Adrenal gland (tissue), 19 donors: ENCODE measurements at regions of chr7 and their contacts with region 1.

Region 1: DNA sequence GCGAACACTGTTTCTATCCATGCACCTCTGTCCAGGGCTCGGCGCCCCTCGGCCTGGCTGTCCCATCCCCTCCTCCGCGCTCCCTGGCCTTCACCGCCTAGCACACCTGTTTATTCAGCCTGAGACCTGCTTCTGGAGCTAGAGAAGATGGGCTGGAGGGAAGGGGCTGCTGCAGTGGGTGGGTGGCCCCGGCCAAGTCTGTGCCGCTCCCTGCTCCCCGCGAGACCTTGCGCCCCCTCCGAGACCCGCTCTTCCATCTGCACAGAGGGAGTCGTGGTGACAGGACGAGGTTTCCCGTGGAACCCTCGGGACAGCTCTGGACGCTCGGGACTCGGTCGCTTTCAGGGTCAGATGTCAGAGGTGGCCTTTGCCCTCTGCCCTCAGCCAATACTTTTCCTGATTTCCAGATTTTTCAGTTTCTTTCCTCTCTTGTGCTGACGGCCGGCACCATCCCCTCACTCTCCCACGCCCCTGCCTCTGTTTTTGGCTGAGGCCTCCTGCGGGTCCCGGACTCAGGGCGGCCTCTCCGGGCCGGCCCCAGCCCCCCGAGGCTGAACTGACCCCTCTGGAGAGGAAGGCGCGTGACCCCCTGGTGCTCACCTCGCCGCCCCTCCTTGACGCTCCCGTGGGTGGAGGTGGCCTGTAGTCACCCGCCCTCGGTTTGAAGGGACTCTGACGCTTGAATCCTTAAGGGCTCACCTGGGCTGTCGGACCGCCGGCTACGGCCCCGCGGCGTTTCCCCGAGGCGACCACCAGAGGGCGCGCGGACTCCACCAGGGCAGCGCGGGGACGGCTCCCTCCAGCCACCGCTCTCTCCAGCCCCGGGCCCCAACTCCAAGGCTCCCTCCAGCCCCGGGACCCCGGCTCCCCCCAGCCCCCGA is 15.6 kb downstream of the SHH start:
- DNase-seq: peak; percentile 46 to 79 (median 69)
- H3K4me3 ChIP-seq: peak overlapping the region in 1 of 4 donors; percentile 24
- H3K27ac ChIP-seq: no peak overlapping the region
- H3K4me1 ChIP-seq: peaks cover 0 to 7% of the 10 kb centered on the region in 2 donors
- H3K27me3 ChIP-seq: peaks cover 15% of the 10 kb centered on the region
- CTCF ChIP-seq: peak; percentile 60 to 94 (median 88)
- POLR2A ChIP-seq: no peak

Region 2: DNA sequence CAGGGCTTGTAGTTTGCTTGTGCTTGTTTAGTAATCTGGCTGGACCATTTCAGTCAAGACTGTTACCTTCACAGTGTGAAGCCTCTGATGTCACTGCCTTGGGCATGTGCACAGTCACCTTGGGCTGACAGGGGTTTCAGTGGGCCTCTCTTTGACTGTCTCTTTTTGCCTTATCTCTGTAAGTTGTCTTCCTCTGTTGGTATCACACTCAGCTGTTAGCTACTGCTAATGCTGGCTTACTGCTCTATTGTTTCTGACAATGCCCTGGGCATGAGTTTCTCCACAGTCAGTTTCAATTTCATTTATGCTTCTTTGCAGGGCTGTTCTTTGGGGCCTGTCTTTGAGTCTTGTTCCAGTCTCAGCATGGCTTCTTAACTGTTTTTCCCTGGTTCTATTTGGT is 217.6 kb after region 1 on chr7:
- intact Hi-C with region 1: no loop called
- DNase-seq: peak in 2 of 7 donors; percentile 4 to 7
- H3K4me3 ChIP-seq: no peak overlapping the region
- H3K27ac ChIP-seq: no peak overlapping the region
- H3K4me1 ChIP-seq: peaks cover 0 to 6% of the 10 kb centered on the region in 2 donors
- H3K27me3 ChIP-seq: no peaks in the 10 kb centered on the region
- CTCF ChIP-seq: no peak
- POLR2A ChIP-seq: no peak

Region 3: DNA sequence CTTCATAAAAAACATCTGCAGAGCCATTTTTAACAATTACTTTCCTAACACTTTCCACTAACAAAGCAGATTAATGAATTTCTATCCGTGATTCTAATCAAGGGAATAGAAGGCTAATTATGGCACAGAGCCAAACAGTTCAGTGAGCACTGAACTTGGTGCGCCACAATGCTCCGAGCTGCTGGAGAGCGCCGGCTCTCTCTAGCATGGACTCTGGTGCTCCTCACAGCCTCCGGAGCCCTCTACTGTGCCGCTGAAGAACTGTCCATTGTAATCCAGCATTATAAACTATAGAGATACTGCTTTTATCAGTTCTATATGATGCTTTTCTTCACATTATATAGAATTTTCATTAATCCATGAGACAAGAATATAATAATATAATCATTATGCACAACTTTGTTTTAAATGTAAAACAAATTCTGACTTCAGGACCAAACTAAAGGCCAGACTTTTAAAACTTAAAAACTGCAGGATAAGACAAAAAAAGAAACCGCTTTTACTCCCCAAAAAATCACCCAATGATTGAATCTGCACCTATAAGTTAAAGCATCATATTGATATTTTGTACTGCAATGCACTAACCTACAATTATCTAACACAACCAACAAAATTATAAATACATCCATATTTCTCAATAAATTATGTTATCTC is 967.5 kb after region 1 on chr7:
- intact Hi-C with region 1: loop called in 1 of 2 experiments (anchors 10 kb)
- DNase-seq: peak; percentile 73 to 87 (median 78)
- H3K4me3 ChIP-seq: no peak overlapping the region
- H3K27ac ChIP-seq: no peak overlapping the region
- H3K4me1 ChIP-seq: peaks cover 0 to 18% of the 10 kb centered on the region in 2 donors
- H3K27me3 ChIP-seq: no peaks in the 10 kb centered on the region
- CTCF ChIP-seq: peak; percentile 51 to 77 (median 71)
- POLR2A ChIP-seq: no peak

Region 4: DNA sequence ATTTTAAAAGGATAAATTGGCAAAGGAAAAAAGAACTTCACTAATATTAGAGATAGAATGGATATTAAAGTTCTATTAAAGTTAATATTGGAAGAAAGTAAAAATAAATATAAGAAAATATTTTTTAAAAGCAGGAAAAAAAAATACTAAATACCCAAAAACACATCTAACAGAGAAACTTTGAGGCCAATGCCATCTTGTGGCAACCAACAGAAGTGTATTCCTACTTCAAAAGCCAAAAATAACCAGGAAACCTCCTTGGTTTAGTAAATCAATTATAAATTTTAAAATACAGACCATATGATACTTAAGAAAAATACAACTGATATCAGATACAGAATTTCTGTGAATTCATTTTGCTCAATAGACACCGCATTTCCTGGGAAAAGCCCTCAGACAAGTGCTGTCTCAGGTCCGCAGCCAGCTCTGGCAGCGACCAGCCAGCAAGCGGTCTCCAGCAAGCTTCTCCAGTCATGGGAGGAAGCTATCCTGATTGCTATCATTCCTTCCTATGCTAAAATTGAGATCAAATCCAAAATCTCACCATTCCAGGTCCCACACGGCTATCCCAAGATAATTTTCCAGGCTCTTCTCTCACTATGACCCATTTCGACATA is 1031.1 kb after region 1 on chr7:
- intact Hi-C with region 1: loop called (anchors 10 kb)
- DNase-seq: no peak
- H3K4me3 ChIP-seq: no peak overlapping the region
- H3K27ac ChIP-seq: no peak overlapping the region
- H3K4me1 ChIP-seq: peaks cover 0 to 9% of the 10 kb centered on the region in 2 donors
- H3K27me3 ChIP-seq: no peaks in the 10 kb centered on the region
- CTCF ChIP-seq: peak in 5 of 6 experiments; percentile 41 to 66 (median 58)
- POLR2A ChIP-seq: no peak

Region 5: GRCh38 chr7:156927571-156928405 is 1131.2 kb after region 1 on chr7:
- intact Hi-C with region 1: loop called in 1 of 2 experiments (anchors 10 kb)
- DNase-seq: peak in 3 of 7 donors; percentile 14 to 58 (median 49)
- H3K4me3 ChIP-seq: no peak overlapping the region
- H3K27ac ChIP-seq: no peak overlapping the region
- H3K4me1 ChIP-seq: no peaks in the 10 kb centered on the region
- H3K27me3 ChIP-seq: no peaks in the 10 kb centered on the region
- CTCF ChIP-seq: no peak
- POLR2A ChIP-seq: no peak